Uterus (tissue), 4 donors: ENCODE measurements at regions of chr2 and their contacts with region 1.

Region 1: DNA sequence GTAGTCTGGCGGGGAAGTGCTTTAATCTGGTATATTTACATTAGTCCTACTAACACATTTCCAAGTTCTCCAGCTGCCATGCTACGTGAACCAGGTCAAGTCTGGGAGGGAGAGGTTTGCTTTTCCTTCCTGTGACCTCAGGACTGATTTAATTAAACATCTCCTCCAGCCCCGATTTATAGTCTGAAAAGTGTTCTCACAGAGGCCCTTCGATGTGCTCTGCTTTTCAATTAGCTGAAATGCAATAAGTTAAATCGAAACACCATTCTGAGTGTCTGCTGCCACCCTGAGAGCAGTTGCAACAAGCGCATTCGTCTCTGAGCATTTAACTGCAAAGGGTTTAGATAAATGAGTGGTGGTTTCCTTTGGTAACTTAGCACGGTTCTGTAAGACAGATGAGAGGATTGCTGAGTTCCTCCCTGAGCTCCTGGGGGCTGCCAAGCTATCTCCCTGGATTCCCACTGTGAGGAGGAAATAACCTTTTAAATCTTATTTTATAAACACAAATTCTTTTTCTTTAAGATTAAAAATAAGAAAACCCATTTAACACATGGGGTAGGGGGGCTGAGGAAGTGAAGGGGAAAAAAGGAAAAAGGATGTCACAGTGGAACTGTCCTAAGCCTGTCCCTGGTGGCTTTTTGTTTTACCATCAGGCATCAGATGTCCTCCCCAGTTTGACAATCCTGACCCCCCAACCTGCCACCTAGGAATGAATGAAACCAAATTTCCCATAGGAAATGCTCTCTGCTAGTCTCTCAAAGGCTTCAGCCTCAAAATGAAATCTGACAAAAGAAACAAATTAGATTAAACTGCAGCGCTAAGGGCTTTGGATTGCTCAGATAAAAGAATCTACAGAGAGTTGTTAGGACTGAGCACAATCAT is 56.5 kb upstream of the CREB1 start:
- DNase-seq: peak; percentile 40 to 51
- H3K4me3 ChIP-seq: no peak overlapping the region
- H3K27ac ChIP-seq: peak overlapping the region in 1 of 2 donors; percentile 13
- H3K4me1 ChIP-seq: no peaks in the 10 kb centered on the region
- H3K27me3 ChIP-seq: no peaks in the 10 kb centered on the region
- CTCF ChIP-seq: peak; percentile 51 to 74 (median 65)
- POLR2A ChIP-seq: no peak

Region 2: GRCh38 chr2:206693399-206694137 is 779.7 kb before region 1 on chr2:
- intact Hi-C with region 1: loop called (anchors 10 kb)
- DNase-seq: peak in 1 of 2 donors; percentile 21
- H3K4me3 ChIP-seq: no peak overlapping the region
- H3K27ac ChIP-seq: no peak overlapping the region
- H3K4me1 ChIP-seq: no peaks in the 10 kb centered on the region
- H3K27me3 ChIP-seq: no peaks in the 10 kb centered on the region
- CTCF ChIP-seq: peak; percentile 42 to 64 (median 56)
- POLR2A ChIP-seq: no peak

Region 3: GRCh38 chr2:206798000-206798399 is 675.3 kb before region 1 on chr2:
- intact Hi-C with region 1: loop called (anchors 10 kb)
- DNase-seq: no peak
- H3K4me3 ChIP-seq: no peak overlapping the region
- H3K27ac ChIP-seq: no peak overlapping the region
- H3K4me1 ChIP-seq: no peaks in the 10 kb centered on the region
- H3K27me3 ChIP-seq: no peaks in the 10 kb centered on the region
- CTCF ChIP-seq: no peak
- POLR2A ChIP-seq: no peak

Region 4: DNA sequence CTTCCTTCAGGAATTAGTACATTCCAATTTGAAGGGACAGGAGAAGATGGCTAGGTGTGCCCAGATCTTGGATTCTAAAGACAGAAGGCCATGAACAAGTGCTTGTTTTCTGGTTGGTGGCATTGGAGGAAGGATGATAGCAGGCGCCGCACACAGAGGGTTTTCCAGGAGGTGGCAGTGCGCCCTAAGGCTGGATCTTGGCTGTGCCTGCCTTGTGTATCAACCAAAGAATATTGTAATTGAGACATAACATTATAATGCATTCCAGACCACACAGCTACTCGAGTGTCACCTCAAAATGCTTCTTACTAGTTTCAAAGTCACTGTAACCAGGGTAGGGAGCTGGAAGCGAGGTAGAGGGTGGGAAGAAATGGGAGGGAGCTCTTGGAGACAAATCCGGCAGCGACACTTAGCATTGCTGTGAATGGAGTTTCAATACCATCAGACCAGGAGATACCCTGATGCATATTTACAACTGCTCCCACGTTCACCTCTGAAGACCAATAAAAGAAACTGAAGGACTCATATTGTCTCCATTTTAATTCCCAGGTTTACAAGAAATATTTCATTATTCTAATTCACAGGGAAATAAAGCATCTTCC is 491.4 kb before region 1 on chr2:
- intact Hi-C with region 1: loop called (anchors 10 kb)
- DNase-seq: peak; percentile 70 to 74
- H3K4me3 ChIP-seq: no peak overlapping the region
- H3K27ac ChIP-seq: no peak overlapping the region
- H3K4me1 ChIP-seq: no peaks in the 10 kb centered on the region
- H3K27me3 ChIP-seq: no peaks in the 10 kb centered on the region
- CTCF ChIP-seq: peak; percentile 76 to 87 (median 82)
- POLR2A ChIP-seq: no peak

Region 5: GRCh38 chr2:207311316-207312005 is 161.8 kb before region 1 on chr2:
- intact Hi-C with region 1: no loop called
- DNase-seq: peak in 1 of 2 donors; percentile 49
- H3K4me3 ChIP-seq: no peak overlapping the region
- H3K27ac ChIP-seq: peak overlapping the region; percentile 4 to 54
- H3K4me1 ChIP-seq: no peaks in the 10 kb centered on the region
- H3K27me3 ChIP-seq: no peaks in the 10 kb centered on the region
- CTCF ChIP-seq: peak in 1 of 4 experiments; percentile 10
- POLR2A ChIP-seq: no peak